ENCODE measurements at regions of chr10 and their contacts with region 1.

Region 1: GRCh38 chr10:99394761-99395386 is 35.5 kb downstream of the GOT1 start:
- DNase-seq: no peak
- H3K4me3 ChIP-seq: no peak overlapping the region
- H3K27ac ChIP-seq: no peak overlapping the region
- H3K27me3 ChIP-seq: peaks cover 4% of the 10 kb centered on the region
- CTCF ChIP-seq: no peak

Region 2: DNA sequence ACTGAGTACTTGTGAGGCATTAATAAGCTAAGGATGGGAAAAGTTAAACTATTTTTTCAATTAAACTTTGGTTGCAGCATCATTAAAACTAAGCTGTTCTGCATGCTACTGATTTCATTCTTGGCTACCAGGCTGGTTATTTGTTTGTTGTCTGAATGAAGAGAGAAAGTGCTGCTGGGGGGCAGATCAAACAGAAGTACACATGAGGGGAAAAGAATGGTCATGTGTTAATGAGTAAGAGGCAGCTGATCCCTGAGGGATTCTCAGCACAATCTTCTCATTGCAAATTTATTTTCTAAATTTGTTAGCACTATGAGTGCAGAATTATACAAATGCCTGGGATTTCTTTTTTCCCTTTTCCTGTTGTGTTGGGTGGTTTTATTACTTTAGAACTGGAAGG is 734.9 kb before region 1 on chr10:
- CTCF ChIA-PET with region 1: no interaction called
- POLR2A ChIA-PET with region 1: no interaction called
- DNase-seq: no peak
- H3K4me3 ChIP-seq: no peak overlapping the region
- H3K27ac ChIP-seq: no peak overlapping the region
- H3K27me3 ChIP-seq: no peaks in the 10 kb centered on the region
- CTCF ChIP-seq: no peak

Region 3: DNA sequence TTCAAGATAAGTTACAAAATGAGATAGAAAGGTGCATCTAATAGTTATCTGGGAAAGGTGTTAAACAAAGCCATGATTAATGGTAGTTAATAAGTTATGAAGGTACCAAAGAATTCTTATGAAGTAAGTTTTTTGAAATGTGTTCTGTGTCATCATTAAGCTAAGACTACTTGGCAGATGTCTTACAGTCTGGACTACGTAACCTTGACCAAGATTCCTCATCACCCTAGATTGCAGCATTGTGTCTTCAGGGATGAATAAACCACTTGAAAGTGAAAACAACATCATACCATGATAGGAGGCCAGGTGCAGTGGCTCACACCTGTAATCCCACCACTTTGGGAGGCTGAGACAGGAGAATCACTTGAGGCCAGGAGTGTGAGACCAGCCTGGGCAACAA is 12.7 kb before region 1 on chr10:
- CTCF ChIA-PET with region 1: interaction called, 10 read pairs
- POLR2A ChIA-PET with region 1: no interaction called
- DNase-seq: no peak
- H3K4me3 ChIP-seq: no peak overlapping the region
- H3K27ac ChIP-seq: no peak overlapping the region
- H3K27me3 ChIP-seq: peaks cover 14% of the 10 kb centered on the region
- CTCF ChIP-seq: no peak

Region 4: GRCh38 chr10:99799613-99800012 is 404.7 kb after region 1 on chr10:
- CTCF ChIA-PET with region 1: no interaction called
- POLR2A ChIA-PET with region 1: no interaction called
- DNase-seq: no peak
- H3K4me3 ChIP-seq: no peak overlapping the region
- H3K27ac ChIP-seq: no peak overlapping the region
- H3K27me3 ChIP-seq: no peaks in the 10 kb centered on the region
- CTCF ChIP-seq: no peak